Heart right ventricle (tissue), 16 donors: ENCODE measurements at regions of chr11 and their contacts with region 1.

Region 1: DNA sequence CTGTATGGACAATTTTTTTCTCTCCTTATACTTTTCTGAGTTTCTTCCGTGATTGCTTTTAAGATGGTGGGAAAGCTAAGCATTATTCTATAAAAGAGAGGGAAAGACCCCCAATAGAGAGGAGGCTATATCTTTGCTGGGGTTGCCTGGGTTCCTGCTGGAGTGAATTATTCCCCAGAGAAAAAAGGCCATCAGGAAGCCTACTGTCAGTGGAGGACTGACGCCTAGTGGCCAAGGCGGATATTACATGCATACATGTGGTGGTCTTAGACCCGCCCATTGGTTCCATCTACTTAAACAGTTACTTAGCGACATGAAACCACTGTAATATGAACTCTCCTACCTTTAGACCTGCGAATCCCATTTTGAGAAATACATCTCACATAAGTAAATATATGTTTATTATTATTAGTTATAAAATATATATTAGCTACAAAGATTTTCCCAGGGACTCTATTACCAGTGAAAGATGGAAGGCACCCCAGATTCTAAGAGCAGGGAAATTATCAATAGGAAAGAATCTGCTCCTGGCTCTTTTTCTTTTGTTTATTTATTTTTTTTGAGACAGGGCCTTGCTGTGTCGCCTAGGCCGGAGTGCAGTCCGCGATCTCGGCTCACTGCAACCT is 15.7 kb upstream of the PGA3 start:
- DNase-seq: peak; percentile 56 to 76
- ATAC-seq: peak in 7 of 8 donors; percentile 46 to 81 (median 71)
- H3K4me3 ChIP-seq: no peak overlapping the region
- H3K27ac ChIP-seq: no peak overlapping the region
- H3K4me1 ChIP-seq: peaks cover 0 to 4% (median 0%) of the 10 kb centered on the region in 9 donors
- H3K27me3 ChIP-seq: peaks cover 0 to 45% (median 5%) of the 10 kb centered on the region in 7 donors
- CTCF ChIP-seq: peak; percentile 80 to 96 (median 93)

Region 2: DNA sequence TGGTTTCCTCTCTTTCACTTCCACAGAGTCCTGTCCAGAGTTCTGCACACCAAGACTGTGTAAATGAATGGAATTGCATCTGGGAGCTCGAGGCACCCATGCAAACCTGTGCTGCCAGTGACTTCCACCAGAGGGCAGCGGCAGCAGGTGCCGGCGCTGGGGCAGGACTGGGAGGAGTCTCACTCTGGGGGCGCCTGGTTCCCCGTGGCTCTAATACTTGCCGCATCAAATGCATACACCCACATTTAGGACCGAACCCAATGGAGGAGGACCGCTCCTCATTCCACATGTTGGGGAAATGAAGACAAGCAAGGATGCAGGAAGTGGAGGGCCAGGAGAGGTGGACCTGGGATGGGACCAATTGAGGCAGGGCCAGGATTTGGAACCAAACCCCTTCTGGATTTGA is 217.2 kb before region 1 on chr11:
- intact Hi-C with region 1: loop called in 1 of 10 experiments (anchors 2 kb)
- DNase-seq: peak; percentile 50 to 69
- ATAC-seq: peak; percentile 53 to 88 (median 74)
- H3K4me3 ChIP-seq: no peak overlapping the region
- H3K27ac ChIP-seq: no peak overlapping the region
- H3K4me1 ChIP-seq: peaks cover 0 to 5% (median 0%) of the 10 kb centered on the region in 9 donors
- H3K27me3 ChIP-seq: peaks cover 0 to 9% (median 0%) of the 10 kb centered on the region in 7 donors
- CTCF ChIP-seq: peak; percentile 70 to 94 (median 90)

Region 3: DNA sequence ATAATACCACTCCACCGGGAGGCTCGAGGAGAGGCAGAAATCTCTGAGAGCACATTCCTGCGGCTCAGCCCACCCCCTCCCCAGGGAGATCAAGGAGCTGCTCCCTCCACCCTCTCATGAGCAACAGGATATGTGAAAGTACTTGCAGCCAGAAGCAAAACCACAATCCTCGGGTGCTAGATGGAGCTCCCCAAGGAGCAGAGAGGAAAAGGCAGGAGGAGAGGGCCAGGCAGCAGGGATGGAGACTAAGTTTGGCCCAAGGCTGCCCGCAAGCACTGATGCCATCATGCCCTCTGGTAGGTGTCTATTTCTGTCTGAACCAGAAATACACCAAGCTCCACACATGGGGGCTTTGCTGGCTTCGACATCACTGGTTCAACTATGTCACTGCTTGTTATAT is 48.7 kb before region 1 on chr11:
- intact Hi-C with region 1: loop called in 1 of 10 experiments (anchors 5 kb)
- DNase-seq: no peak
- ATAC-seq: peak in 6 of 8 donors; percentile 31 to 63 (median 47)
- H3K4me3 ChIP-seq: no peak overlapping the region
- H3K27ac ChIP-seq: peak overlapping the region in 3 of 10 donors; percentile 6 to 59 (median 9)
- H3K4me1 ChIP-seq: peaks cover 10 to 49% (median 24%) of the 10 kb centered on the region in 9 donors
- H3K27me3 ChIP-seq: no peaks in the 10 kb centered on the region
- CTCF ChIP-seq: no peak